Posterior vena cava (tissue), 2 donors: ENCODE measurements at regions of chr16 and their contacts with region 1.

Region 1: GRCh38 chr16:58044266-58045019 is 18.9 kb downstream of the MMP15 start:
- DNase-seq: no peak

Region 2: GRCh38 chr16:56970934-56971767 is 1073.3 kb before region 1 on chr16:
- intact Hi-C with region 1: loop called in 1 of 2 experiments (anchors 5 kb)
- DNase-seq: peak; percentile 57

Region 3: DNA sequence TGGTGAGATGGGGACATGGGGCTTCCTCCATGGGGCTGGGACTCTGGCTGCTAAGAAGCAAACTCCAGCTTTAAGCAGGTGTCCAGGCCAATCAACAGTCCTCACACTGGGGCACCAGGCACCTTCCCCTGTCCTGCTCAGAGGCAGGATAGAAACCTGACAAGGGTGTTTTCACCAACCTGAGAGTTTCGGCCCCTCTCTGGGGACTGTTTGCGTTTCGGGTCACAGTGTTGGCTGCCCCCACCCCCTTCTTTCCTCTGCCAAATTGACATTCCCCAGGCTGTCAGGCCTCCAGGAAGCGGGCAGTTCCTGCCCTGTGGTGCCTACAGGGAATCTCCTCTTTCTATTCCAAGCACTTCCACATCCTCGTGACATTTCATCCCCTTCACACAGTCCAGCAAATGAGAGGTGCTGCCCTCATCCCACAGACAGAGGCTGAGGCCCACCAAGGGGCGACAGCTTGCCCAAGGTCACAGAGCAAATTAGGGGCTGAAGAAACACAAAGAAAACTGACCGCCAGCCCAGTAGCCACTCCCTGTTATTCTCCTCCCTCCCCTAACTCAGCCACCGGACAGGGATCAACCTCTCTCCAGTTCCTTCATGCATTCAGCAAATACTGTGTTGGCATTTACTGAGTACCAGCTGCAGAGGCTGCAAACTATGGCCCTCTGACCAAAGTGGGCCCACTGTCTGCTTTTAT is 19.1 kb after region 1 on chr16:
- intact Hi-C with region 1: loop called in 1 of 2 experiments (anchors 1 kb)
- DNase-seq: no peak